CD4-positive, alpha-beta T cell (primary cell): ENCODE measurements at regions of chr18 and their contacts with region 1.

Region 1: GRCh38 chr18:812376-813171 is 532 bp upstream of the YES1 start:
- DNase-seq: peak; percentile 51 to 88 (median 68)
- ATAC-seq: peak; percentile 66
- H3K4me3 ChIP-seq: peak overlapping the region; percentile 93
- H3K4me3 Mint-ChIP-seq: peak overlapping the region; percentile 90
- H3K27ac ChIP-seq: peak overlapping the region; percentile 93 to 95
- H3K27ac Mint-ChIP-seq: peak overlapping the region; percentile 94
- H3K4me1 ChIP-seq: peaks cover 30% of the 10 kb centered on the region
- H3K4me1 Mint-ChIP-seq: peaks cover 68% of the 10 kb centered on the region
- H3K27me3 ChIP-seq: no peaks in the 10 kb centered on the region
- H3K27me3 Mint-ChIP-seq: no peaks in the 10 kb centered on the region
- CTCF ChIP-seq: no peak

Region 2: GRCh38 chr18:434410-434809 is 378.2 kb before region 1 on chr18:
- CTCF ChIA-PET with region 1: no interaction called
- POLR2A ChIA-PET with region 1: no interaction called
- intact Hi-C with region 1: no loop called
- DNase-seq: no peak
- ATAC-seq: no peak
- H3K4me3 ChIP-seq: no peak overlapping the region
- H3K4me3 Mint-ChIP-seq: no peak overlapping the region
- H3K27ac ChIP-seq: no peak overlapping the region
- H3K27ac Mint-ChIP-seq: no peak overlapping the region
- H3K4me1 ChIP-seq: no peaks in the 10 kb centered on the region
- H3K4me1 Mint-ChIP-seq: no peaks in the 10 kb centered on the region
- H3K27me3 ChIP-seq: peaks cover 0 to 3% of the 10 kb centered on the region in 2 experiments
- H3K27me3 Mint-ChIP-seq: peaks cover 15% of the 10 kb centered on the region
- CTCF ChIP-seq: no peak

Region 3: DNA sequence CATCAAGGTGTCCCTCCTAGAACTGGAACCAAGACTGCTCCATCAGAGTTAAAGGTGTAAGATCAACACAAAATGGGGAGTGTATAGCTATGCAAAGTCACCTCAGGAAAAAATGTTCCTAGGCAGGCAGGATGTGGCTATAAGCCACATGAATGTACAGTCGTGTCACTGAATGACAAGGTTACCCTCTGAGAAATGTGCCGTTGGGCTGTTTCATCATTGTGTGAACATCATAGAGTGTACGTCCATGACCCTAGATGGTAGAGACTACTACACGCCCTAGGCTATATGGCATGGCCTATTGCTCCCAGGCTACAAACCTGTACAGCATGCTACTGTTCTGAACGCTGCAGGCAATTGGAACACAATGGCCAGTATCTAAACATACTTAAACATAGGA is 130.6 kb before region 1 on chr18:
- CTCF ChIA-PET with region 1: no interaction called
- POLR2A ChIA-PET with region 1: interaction called, 4 read pairs
- intact Hi-C with region 1: loop called in 1 of 2 experiments (anchors 1 kb)
- DNase-seq: peak in 8 of 14 experiments; percentile 5 to 79 (median 26)
- ATAC-seq: peak; percentile 98
- H3K4me3 ChIP-seq: no peak overlapping the region
- H3K4me3 Mint-ChIP-seq: peak overlapping the region; percentile 30
- H3K27ac ChIP-seq: no peak overlapping the region
- H3K27ac Mint-ChIP-seq: peak overlapping the region; percentile 80
- H3K4me1 ChIP-seq: peaks cover 16% of the 10 kb centered on the region
- H3K4me1 Mint-ChIP-seq: peaks cover 11% of the 10 kb centered on the region
- H3K27me3 ChIP-seq: no peaks in the 10 kb centered on the region
- H3K27me3 Mint-ChIP-seq: no peaks in the 10 kb centered on the region
- CTCF ChIP-seq: no peak

Region 4: GRCh38 chr18:839224-840022 is 26.8 kb after region 1 on chr18:
- CTCF ChIA-PET with region 1: interaction called, 10 read pairs
- POLR2A ChIA-PET with region 1: interaction called, 5 read pairs
- intact Hi-C with region 1: no loop called
- DNase-seq: peak; percentile 70 to 94 (median 89)
- ATAC-seq: peak; percentile 97
- H3K4me3 ChIP-seq: no peak overlapping the region
- H3K4me3 Mint-ChIP-seq: no peak overlapping the region
- H3K27ac ChIP-seq: no peak overlapping the region
- H3K27ac Mint-ChIP-seq: no peak overlapping the region
- H3K4me1 ChIP-seq: peaks cover 3% of the 10 kb centered on the region
- H3K4me1 Mint-ChIP-seq: peaks cover 6% of the 10 kb centered on the region
- H3K27me3 ChIP-seq: no peaks in the 10 kb centered on the region
- H3K27me3 Mint-ChIP-seq: no peaks in the 10 kb centered on the region
- CTCF ChIP-seq: peak; percentile 91